ENCODE measurements at regions of chr20 and their contacts with region 1.

Region 1: DNA sequence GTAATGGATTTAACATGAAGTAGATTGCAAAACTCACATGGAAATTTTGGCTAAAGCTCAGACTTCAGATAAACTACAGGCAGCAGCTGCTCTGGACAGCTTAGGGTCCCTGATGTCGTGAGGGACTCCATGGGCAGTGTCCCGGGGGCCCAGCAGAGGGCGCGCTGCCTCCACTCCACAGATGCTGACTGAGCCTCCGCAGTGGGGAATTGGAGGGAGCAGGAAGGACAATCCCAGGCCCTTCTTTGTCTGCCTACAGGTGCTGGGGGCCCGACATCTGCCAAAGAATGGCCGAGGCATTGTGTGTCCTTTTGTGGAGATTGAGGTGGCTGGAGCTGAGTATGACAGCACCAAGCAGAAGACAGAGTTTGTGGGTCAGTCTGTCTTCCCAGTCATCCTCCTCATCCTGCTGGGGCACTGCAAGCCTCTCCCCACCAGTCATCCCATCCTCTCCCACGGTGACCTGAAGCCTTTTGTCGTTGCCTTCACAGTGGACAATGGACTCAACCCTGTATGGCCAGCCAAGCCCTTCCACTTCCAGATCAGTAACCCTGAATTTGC is 35.9 kb downstream of the PLCG1 start:
- DNase-seq: peak; percentile 89 to 90
- ATAC-seq: peak; percentile 79 to 89 (median 85)
- H3K4me3 ChIP-seq: peak overlapping the region in 1 of 10 donors; percentile 0
- H3K27ac ChIP-seq: peak overlapping the region; percentile 66 to 93 (median 85)
- H3K4me1 ChIP-seq: peaks cover 30 to 72% (median 62%) of the 10 kb centered on the region in 9 donors
- H3K27me3 ChIP-seq: no peaks in the 10 kb centered on the region
- CTCF ChIP-seq: peak; percentile 94 to 99 (median 98)

Region 2: GRCh38 chr20:41136680-41137613 is 36.3 kb before region 1 on chr20 and contains the start of gene PLCG1:
- intact Hi-C with region 1: loop called in 4 of 10 experiments (anchors 2 to 5 kb)
- DNase-seq: peak; percentile 91 to 93
- ATAC-seq: peak; percentile 83 to 90 (median 86)
- H3K4me3 ChIP-seq: peak within 1 kb of the TSS; percentile 71 to 99 (median 94)
- H3K27ac ChIP-seq: peak within 1 kb of the TSS; percentile 90 to 100 (median 98)
- H3K4me1 ChIP-seq: peaks cover 21 to 58% (median 50%) of the 10 kb centered on the region in 9 donors
- H3K27me3 ChIP-seq: peaks cover 0 to 9% (median 0%) of the 10 kb centered on the region in 7 donors
- CTCF ChIP-seq: no peak
- total RNA-seq, gene PLCG1: 36.6 to 63.6 (median 47.9) TPM

Region 3: DNA sequence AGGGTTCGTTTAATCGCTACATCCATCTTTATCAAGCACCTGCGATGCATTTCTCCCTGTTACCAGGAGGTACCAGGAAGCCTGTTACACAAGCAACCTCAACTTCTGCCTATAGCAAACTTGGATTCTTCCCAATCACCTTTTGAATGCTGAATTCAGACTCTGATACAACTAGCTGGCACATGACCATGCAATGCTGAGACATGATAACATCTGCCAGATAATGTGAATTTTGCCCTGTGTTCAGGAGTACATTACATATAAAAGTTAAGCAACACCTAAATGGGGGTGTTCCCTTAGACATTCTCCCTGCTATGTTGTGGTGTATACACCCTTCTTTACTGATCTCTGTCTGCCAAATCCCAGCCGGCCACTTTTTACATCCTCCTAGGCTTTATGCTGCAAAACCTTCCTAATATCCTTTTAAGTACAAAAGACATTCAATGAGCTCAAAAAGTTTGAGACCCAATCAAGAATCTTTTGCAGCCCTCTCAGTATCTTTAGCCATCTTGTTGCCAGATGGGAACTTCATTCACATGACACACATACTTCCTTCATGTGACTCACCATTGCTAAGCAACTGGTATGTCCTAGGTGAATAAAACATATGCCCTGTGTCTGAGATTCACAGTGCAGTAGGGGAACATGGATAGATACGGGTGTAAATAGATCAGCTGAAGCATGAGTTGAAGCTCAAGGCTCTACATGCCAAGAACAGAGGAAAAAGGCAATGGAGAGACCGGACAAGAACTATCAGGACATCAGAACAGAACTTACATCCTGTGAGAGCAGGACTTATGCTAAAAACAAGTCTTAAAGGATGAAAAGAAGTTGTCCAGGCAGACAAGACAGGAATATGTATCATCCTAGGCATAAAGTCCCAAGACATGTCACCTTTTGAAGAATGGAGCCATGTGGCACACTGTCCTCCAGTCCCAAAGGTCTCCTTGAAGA is 60.0 kb after region 1 on chr20:
- intact Hi-C with region 1: loop called (anchors 1 to 10 kb)
- DNase-seq: no peak
- ATAC-seq: peak; percentile 32 to 70 (median 55)
- H3K4me3 ChIP-seq: peak overlapping the region in 2 of 10 donors; percentile 26 to 34
- H3K27ac ChIP-seq: peak overlapping the region; percentile 63 to 88 (median 82)
- H3K4me1 ChIP-seq: peaks cover 24 to 74% (median 69%) of the 10 kb centered on the region in 9 donors
- H3K27me3 ChIP-seq: no peaks in the 10 kb centered on the region
- CTCF ChIP-seq: no peak

Region 4: GRCh38 chr20:41317536-41318270 is 144.5 kb after region 1 on chr20 and contains the start of gene ZHX3:
- intact Hi-C with region 1: loop called in 3 of 10 experiments (anchors 5 kb)
- DNase-seq: peak; percentile 97 to 99
- ATAC-seq: peak; percentile 97 to 99 (median 98)
- H3K4me3 ChIP-seq: peak within 1 kb of the TSS; percentile 53 to 90 (median 84)
- H3K27ac ChIP-seq: peak within 1 kb of the TSS; percentile 75 to 96 (median 92)
- H3K4me1 ChIP-seq: peaks cover 3 to 50% (median 41%) of the 10 kb centered on the region in 9 donors
- H3K27me3 ChIP-seq: no peaks in the 10 kb centered on the region
- CTCF ChIP-seq: peak in 1 of 9 donors; percentile 9
- total RNA-seq, gene ZHX3: 26.2 to 51.8 (median 31.0) TPM